Tibial artery (tissue), 4 donors: ENCODE measurements at regions of chr11 and their contacts with region 1.

Region 1: DNA sequence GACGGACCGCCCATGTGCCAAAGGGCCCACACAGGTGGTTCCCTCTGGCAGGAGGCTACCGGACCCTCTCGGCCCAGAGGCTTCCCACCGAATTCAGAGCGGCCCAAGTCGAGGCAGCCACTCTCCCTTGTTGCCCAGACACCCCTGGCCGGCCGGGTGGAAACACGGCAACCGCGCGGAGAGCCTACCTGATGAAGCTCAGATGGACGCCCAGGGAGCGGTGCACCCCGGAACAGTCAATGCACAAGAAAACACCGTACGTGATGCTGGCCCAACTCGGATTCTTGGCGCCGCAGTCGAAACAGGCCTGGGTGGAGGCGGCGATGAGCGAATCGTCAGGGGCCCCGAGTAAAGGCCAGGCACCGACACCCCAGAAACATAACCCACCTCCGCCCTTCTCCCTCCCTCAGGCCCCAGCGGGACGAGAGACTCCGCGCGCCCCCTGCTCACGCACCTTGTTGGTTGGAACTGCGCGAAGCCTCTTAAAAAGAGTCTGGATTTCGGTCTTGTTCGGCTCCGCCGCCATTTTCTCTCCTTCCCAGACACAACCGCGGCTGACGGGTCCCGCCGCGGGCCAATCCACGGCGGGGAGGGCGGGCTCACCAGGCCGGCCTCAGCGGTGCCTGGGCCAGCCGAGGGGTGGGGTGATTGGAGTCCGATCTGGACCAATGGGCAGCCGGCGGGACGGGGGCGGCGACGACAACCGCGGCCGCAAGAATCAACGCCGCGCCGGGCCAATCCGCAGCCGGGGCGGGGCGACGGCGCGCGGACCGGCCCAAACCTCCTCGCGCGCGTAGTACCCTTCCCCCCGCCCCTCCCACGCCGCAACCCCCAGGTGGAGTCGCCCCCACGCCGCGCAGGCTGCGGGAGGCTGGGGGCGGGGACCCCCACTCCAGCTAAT is at the start of gene ARFGAP2:
- DNase-seq: peak; percentile 97 to 98
- H3K4me3 ChIP-seq: peak within 1 kb of the TSS; percentile 90 to 99
- H3K27ac ChIP-seq: peak within 1 kb of the TSS; percentile 92 to 95
- H3K4me1 ChIP-seq: peaks cover 0 to 54% (median 35%) of the 10 kb centered on the region in 4 donors
- H3K27me3 ChIP-seq: no peaks in the 10 kb centered on the region
- CTCF ChIP-seq: no peak

Region 2: DNA sequence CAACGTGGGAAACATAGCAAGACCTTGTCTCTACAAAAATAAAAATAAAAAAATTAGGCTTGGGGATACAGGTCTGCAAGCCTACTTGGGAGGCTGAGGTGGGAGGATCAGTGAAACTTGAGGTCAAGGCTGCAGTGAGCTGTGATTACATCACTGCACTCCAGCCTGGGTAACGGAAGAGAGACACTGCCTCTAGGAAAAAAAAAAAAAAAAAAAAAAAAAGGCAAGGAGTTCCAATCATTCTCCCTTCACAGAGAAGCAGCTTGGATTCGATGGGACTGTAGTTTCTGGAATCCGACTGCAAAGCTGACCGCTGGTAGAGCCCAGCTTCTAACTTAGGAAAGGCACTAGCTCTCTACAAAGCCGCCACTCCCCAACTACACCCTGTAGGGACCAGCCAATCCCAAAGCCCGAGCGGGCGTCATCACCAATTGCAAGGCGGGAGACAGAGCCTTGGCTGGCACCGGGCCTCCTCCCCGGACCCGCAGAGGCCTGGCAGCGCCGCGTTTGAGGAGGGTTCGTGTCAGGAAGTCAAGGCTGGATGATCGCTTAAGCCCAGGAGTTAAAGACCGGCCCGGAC is 37.5 kb after region 1 on chr11:
- intact Hi-C with region 1: loop called (anchors 5 kb)
- DNase-seq: peak; percentile 96 to 98
- H3K4me3 ChIP-seq: peak overlapping the region; percentile 65 to 66
- H3K27ac ChIP-seq: peak overlapping the region; percentile 93 to 94
- H3K4me1 ChIP-seq: peaks cover 0 to 43% (median 28%) of the 10 kb centered on the region in 4 donors
- H3K27me3 ChIP-seq: no peaks in the 10 kb centered on the region
- CTCF ChIP-seq: no peak

Region 3: DNA sequence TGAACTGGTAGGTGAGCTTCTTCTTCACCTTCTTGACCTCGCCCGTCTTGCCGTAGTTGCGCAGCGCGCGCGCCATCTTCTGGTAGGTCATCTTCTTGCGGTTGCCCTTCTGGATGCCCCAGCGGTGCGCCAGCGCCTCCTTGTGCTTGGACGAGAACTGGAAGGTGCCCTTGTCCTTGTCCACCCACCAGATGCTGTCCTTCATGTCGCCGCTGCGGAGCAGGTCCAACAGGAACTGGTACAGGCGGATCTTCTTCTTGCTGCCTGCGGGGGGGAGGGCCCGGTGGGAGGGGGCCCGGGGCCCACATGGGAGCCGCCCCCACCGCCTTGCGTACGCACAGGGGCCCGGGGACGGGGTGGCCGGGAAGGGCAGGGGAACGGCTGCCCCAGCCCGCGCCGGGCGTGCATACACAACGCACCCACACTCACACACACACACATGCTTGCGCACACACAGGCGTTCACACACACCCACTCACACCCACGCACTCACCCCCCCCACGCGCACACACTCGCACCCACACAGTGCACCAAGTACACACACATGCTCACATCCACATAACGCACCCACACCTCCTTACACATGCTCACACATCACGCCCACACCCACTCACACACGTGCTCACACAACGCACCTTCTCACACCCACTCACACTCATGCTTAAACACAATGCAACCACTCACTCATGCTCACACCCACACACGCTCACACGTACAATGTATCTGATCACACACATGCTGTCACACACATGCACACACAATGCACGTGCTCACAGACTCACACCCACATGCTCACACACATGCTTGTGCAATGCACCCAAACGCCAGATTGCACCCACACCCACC is 178.9 kb after region 1 on chr11:
- intact Hi-C with region 1: loop called (anchors 5 kb)
- DNase-seq: peak; percentile 89 to 94
- H3K4me3 ChIP-seq: peak overlapping the region; percentile 38 to 54
- H3K27ac ChIP-seq: peak overlapping the region in 1 of 2 donors; percentile 39
- H3K4me1 ChIP-seq: peaks cover 0 to 11% (median 4%) of the 10 kb centered on the region in 4 donors
- H3K27me3 ChIP-seq: no peaks in the 10 kb centered on the region
- CTCF ChIP-seq: peak; percentile 94 to 95

Region 4: GRCh38 chr11:47411884-47412746 is 235.5 kb after region 1 on chr11:
- intact Hi-C with region 1: loop called (anchors 10 kb)
- DNase-seq: no peak
- H3K4me3 ChIP-seq: no peak overlapping the region
- H3K27ac ChIP-seq: peak overlapping the region; percentile 9 to 45
- H3K4me1 ChIP-seq: peaks cover 19 to 82% (median 66%) of the 10 kb centered on the region in 4 donors
- H3K27me3 ChIP-seq: no peaks in the 10 kb centered on the region
- CTCF ChIP-seq: peak; percentile 44 to 64